ENCODE measurements at regions of chr20 and their contacts with region 1.

Region 1: GRCh38 chr20:62427172-62428001 is at the start of gene RBBP8NL:
- DNase-seq: no peak
- H3K4me3 ChIP-seq: no peak within 1 kb of the TSS
- H3K27ac ChIP-seq: no peak within 1 kb of the TSS
- H3K4me1 ChIP-seq: no peaks in the 10 kb centered on the region
- H3K27me3 ChIP-seq: no peaks in the 10 kb centered on the region
- CTCF ChIP-seq: no peak
- EP300 ChIP-seq: no peak
- POLR2A ChIP-seq: no peak
- total RNA-seq, gene RBBP8NL: 0.32 to 0.46 TPM in 2 of 7 donors, not detected in the others

Region 2: GRCh38 chr20:62274332-62274950 is 152.9 kb before region 1 on chr20:
- intact Hi-C with region 1: no loop called
- DNase-seq: peak in 4 of 5 donors; percentile 45 to 74 (median 60)
- H3K4me3 ChIP-seq: no peak overlapping the region
- H3K27ac ChIP-seq: no peak overlapping the region
- H3K4me1 ChIP-seq: peaks cover 13% of the 10 kb centered on the region
- H3K27me3 ChIP-seq: no peaks in the 10 kb centered on the region
- CTCF ChIP-seq: no peak
- EP300 ChIP-seq: no peak
- POLR2A ChIP-seq: no peak

Region 3: GRCh38 chr20:62595491-62595890 is 168.1 kb after region 1 on chr20:
- intact Hi-C with region 1: loop called in 1 of 4 experiments (anchors 10 kb)
- DNase-seq: peak; percentile 45 to 68 (median 47)
- H3K4me3 ChIP-seq: no peak overlapping the region
- H3K27ac ChIP-seq: no peak overlapping the region
- H3K4me1 ChIP-seq: peaks cover 3% of the 10 kb centered on the region
- H3K27me3 ChIP-seq: no peaks in the 10 kb centered on the region
- CTCF ChIP-seq: no peak
- EP300 ChIP-seq: no peak
- POLR2A ChIP-seq: no peak